Endothelial cell of umbilical vein (primary cell): ENCODE measurements at regions of chr9 and their contacts with region 1.

Region 1: DNA sequence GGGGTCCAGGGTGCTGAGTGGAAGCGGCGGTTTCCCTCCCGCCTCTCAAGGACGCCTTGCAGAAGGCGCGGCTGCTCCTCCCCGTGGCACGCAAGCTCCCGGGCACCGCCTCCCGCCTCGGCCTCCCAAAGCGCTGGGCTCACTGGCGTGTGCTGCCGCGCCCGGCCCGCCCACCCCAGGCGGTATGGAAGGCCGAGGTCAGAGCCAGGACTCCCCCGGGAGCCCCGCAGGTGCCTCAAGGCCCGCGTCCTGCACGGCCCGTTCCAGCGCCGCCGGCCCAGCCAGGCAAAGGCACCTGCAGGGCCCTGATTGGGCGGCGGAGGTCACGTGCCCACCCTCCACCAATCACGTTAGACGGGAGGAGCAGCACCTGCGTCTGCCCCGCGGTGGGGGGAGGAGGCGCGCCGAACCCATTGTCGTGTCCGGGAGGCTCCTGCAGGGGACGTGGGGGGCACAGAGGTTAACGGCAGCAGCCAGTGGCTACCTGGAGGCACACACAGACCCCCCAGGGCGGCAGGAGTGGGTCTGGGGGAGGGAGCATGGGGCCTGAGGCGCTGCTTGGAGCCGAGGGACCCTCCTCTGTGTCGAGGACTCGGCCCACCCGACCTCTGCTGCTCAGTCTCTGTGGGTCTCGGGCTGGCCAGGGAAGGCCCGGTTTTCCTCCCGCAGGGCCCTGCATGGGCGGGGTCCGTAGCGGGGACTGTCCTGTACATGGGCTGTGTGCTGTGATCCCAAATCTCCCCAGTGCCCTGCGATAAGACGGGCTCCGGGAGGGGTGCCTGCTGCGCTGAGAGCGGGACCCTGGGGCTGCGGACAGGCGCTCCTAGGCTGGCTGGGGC is 2.0 kb upstream of the LCN12 start:
- DNase-seq: peak; percentile 93
- H3K4me3 ChIP-seq: peak overlapping the region; percentile 4 to 77 (median 9)
- H3K27ac ChIP-seq: no peak overlapping the region
- H3K4me1 ChIP-seq: peaks cover 5% of the 10 kb centered on the region
- H3K27me3 ChIP-seq: no peaks in the 10 kb centered on the region
- CTCF ChIP-seq: no peak
- POLR2A ChIP-seq: peak; percentile 57

Region 2: GRCh38 chr9:136978073-136978864 is 28.2 kb after region 1 on chr9:
- CTCF ChIA-PET with region 1: interaction called, 8 read pairs
- POLR2A ChIA-PET with region 1: interaction called, 7 read pairs
- dilution Hi-C with region 1: no loop called
- intact Hi-C with region 1: loop called (anchors 2 kb)
- DNase-seq: peak; percentile 39
- H3K4me3 ChIP-seq: peak overlapping the region in 1 of 3 experiments; percentile 32
- H3K27ac ChIP-seq: no peak overlapping the region
- H3K4me1 ChIP-seq: peaks cover 4% of the 10 kb centered on the region
- H3K27me3 ChIP-seq: no peaks in the 10 kb centered on the region
- CTCF ChIP-seq: no peak
- POLR2A ChIP-seq: no peak